ENCODE measurements at regions of chr6 and their contacts with region 1.

Region 1: DNA sequence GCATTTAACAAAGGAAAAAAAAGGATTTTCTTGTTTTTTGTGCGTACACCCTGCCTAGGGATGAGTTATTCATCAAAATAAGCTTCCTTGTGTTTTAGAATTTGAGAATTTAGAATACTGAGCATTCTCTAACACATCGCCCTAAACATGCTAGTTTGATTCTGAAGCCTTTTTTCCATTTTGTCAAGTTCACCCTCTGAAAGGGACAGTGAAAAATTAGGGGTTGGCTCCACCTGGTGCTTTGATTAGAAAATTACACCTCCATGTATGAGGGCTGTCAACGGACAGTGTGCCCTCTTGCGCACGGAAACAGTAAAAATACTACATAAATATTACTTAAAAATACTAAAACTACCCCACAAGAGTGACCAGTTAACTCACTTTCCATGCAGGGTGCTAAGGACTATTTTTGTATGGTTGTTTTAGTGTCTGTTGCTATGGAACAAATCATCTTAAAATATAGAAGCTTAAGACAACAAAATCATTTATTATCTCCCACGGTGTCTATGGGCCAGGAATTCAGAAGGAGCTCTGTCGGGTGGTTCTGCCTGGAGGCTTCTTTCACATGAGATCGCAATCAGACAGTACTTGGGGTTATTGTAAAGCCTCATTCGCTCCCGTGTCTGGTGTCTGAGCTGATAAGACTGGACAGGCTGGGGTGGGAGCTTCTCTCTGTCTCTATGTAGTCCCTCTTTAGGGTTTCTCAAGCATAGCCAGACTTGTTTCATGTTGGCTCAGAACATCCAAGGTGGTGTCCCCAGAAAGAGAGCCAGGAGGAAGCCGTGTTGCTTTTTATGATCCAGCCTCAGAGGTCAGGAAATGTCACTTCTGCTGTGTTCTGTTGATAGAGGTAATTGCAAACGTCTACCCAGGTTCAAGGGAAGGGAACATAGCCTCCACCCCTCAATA is 41.1 kb upstream of the TMEM170B start:
- DNase-seq: no peak
- ATAC-seq: peak; percentile 79
- H3K4me3 Mint-ChIP-seq: no peak overlapping the region
- H3K27ac Mint-ChIP-seq: peak overlapping the region; percentile 69
- H3K4me1 Mint-ChIP-seq: peaks cover 5% of the 10 kb centered on the region
- H3K27me3 Mint-ChIP-seq: no peaks in the 10 kb centered on the region
- CTCF ChIP-seq: peak; percentile 89

Region 2: GRCh38 chr6:10847684-10848083 is 648.7 kb before region 1 on chr6:
- CTCF ChIA-PET with region 1: no interaction called
- POLR2A ChIA-PET with region 1: no interaction called
- intact Hi-C with region 1: loop called (anchors 5 kb)
- DNase-seq: no peak
- ATAC-seq: no peak
- H3K4me3 Mint-ChIP-seq: no peak overlapping the region
- H3K27ac Mint-ChIP-seq: no peak overlapping the region
- H3K4me1 Mint-ChIP-seq: no peaks in the 10 kb centered on the region
- H3K27me3 Mint-ChIP-seq: peaks cover 6% of the 10 kb centered on the region
- CTCF ChIP-seq: no peak

Region 3: DNA sequence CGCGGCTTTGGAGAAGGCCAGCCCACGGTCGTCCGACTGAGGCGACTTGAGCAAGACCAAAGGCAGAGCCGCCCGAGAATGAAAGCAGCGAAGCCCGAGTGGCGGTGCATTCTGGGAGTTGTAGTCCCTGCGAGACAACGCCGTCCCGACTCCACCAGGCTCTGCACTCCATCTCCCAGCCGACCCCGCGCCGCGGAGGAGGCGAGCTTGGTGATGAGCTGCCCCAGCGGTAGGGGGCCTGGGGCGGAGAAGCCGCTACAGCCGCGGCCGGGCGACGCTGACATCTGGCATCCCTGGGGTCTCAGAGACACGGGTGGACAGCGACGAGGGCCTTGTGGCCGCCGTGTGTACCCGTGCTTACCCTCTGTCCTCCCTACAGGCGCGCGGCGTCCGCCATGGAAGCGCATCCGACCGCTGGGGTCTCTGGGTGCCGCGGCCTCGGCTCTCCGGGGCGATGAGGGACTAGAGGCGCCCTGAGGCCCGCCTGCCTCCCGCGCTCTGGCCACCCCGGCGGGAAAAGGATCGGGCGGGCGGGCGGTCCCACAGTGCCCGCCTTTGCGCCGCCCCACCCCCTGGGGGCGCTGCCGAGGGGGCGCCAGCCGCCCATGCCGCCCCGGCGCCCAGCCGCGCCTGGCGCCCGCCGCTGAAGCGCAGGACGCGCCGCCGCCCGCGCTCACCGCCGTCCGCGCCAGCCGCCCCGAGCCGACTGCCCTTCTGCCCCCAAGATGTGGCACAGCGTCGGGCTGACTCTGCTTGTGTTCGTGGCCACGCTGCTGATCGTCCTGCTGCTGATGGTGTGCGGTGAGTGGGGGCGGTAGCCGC is 402.6 kb before region 1 on chr6 and contains the start of gene SMIM13:
- CTCF ChIA-PET with region 1: interaction called, 6 read pairs
- POLR2A ChIA-PET with region 1: interaction called, 4 read pairs
- intact Hi-C with region 1: loop called (anchors 1 kb)
- DNase-seq: peak; percentile 90
- ATAC-seq: peak; percentile 90
- H3K4me3 Mint-ChIP-seq: peak within 1 kb of the TSS; percentile 96
- H3K27ac Mint-ChIP-seq: peak within 1 kb of the TSS; percentile 98
- H3K4me1 Mint-ChIP-seq: peaks cover 20% of the 10 kb centered on the region
- H3K27me3 Mint-ChIP-seq: peaks cover 3% of the 10 kb centered on the region
- CTCF ChIP-seq: no peak
- total RNA-seq, gene SMIM13: 5.8 and 5.9 TPM in 2 replicates

Region 4: DNA sequence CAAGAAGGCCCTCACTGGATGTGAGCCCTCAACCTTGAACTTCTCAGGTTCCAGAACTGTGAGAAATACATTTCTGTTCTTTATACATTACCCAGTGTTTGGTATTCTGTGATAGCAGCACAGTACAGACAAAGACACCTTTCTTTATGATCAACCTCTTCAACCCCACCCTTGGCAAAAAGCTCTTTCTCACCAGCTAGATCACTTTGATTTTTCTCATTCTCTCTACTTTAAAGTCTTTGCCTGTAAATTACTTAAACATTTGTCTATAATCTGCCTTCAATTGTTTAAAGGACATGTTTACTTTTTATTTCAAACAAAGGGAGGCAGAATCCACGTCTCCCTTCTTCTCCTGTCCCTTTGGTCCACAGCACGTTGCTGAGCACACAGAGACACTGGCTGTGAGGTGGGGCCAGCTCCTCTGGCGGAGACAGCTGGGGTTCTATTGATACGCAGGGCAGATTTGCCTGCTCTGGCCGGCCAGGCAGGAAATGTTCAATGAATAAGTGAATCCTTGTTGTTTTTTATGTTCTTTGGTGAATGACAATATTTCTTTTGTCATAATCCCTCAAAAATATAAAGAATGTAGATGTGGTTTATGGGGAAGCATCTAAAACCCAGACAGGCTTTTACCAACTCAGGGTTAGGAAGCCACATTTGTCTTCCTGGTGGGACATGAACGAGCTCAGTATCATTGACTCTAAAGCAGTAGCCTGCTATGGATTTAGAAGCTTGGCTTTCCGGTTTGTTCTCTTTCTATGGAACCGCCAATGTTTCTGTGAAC is 316.8 kb before region 1 on chr6:
- CTCF ChIA-PET with region 1: interaction called, 157 read pairs
- POLR2A ChIA-PET with region 1: no interaction called
- intact Hi-C with region 1: no loop called
- DNase-seq: no peak
- ATAC-seq: no peak
- H3K4me3 Mint-ChIP-seq: no peak overlapping the region
- H3K27ac Mint-ChIP-seq: no peak overlapping the region
- H3K4me1 Mint-ChIP-seq: no peaks in the 10 kb centered on the region
- H3K27me3 Mint-ChIP-seq: no peaks in the 10 kb centered on the region
- CTCF ChIP-seq: no peak

Region 5: GRCh38 chr6:11317885-11318771 is 178.3 kb before region 1 on chr6:
- CTCF ChIA-PET with region 1: interaction called, 8 read pairs
- POLR2A ChIA-PET with region 1: no interaction called
- intact Hi-C with region 1: loop called (anchors 1 kb)
- DNase-seq: no peak
- ATAC-seq: peak; percentile 89
- H3K4me3 Mint-ChIP-seq: peak overlapping the region; percentile 12
- H3K27ac Mint-ChIP-seq: peak overlapping the region; percentile 76
- H3K4me1 Mint-ChIP-seq: peaks cover 24% of the 10 kb centered on the region
- H3K27me3 Mint-ChIP-seq: no peaks in the 10 kb centered on the region
- CTCF ChIP-seq: no peak

Region 6: GRCh38 chr6:11404838-11405237 is 91.6 kb before region 1 on chr6:
- CTCF ChIA-PET with region 1: interaction called, 3 read pairs
- POLR2A ChIA-PET with region 1: interaction called, 4 read pairs
- intact Hi-C with region 1: loop called (anchors 2 kb)
- DNase-seq: no peak
- ATAC-seq: peak; percentile 47
- H3K4me3 Mint-ChIP-seq: peak overlapping the region; percentile 39
- H3K27ac Mint-ChIP-seq: peak overlapping the region; percentile 79
- H3K4me1 Mint-ChIP-seq: peaks cover 55% of the 10 kb centered on the region
- H3K27me3 Mint-ChIP-seq: no peaks in the 10 kb centered on the region
- CTCF ChIP-seq: no peak

Region 7: DNA sequence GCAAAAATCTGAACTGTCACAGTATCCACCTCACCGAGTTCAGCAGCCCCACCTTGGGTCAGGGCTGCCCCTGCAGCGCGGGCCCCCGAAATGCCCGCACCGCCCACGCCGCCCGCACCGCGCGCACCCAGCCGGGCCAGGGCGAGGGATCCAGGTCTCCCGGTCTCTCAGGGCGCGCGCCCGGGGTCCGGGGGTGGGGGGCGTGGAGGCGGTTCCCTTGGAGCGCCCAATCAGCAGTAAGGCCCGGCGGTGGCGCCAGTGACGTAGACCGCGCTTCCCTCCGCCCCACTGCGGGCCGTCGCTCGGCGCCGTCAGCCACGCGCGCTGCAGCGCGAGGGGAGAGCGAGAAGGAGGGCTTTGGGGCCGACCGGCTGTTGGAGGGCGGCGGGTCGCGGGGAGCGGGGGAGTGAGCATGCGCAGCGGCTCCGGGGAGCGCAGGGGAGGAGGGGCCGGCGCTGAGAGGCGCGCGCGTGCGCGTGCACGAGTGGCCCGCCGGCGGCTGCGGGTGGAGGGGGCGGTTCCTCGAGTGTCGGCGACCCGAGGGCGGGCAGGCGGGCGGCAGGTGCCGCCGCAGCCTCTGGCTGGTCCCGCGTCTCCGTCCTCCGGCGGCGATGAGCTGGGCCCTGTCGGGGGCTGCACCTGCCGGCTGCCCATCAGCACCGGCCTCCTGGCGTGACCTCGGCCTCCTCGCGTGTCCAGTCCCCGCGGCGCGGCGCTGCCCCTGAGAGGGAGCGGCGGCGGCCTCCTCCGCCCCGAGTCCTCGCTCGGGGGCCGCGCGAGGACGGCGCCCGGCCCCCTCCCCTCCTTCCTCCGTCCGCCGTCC is 41.0 kb after region 1 on chr6 and contains the start of gene TMEM170B:
- CTCF ChIA-PET with region 1: interaction called, 8 read pairs
- POLR2A ChIA-PET with region 1: no interaction called
- intact Hi-C with region 1: loop called (anchors 1 kb)
- DNase-seq: peak; percentile 99
- ATAC-seq: peak; percentile 94
- H3K4me3 Mint-ChIP-seq: peak within 1 kb of the TSS; percentile 84
- H3K27ac Mint-ChIP-seq: peak within 1 kb of the TSS; percentile 74
- H3K4me1 Mint-ChIP-seq: peaks cover 11% of the 10 kb centered on the region
- H3K27me3 Mint-ChIP-seq: no peaks in the 10 kb centered on the region
- CTCF ChIP-seq: no peak
- total RNA-seq, gene TMEM170B: 2.6 and 2.8 TPM in 2 replicates

Region 8: GRCh38 chr6:11595903-11596302 is 99.5 kb after region 1 on chr6:
- CTCF ChIA-PET with region 1: no interaction called
- POLR2A ChIA-PET with region 1: no interaction called
- intact Hi-C with region 1: no loop called
- DNase-seq: no peak
- ATAC-seq: no peak
- H3K4me3 Mint-ChIP-seq: no peak overlapping the region
- H3K27ac Mint-ChIP-seq: no peak overlapping the region
- H3K4me1 Mint-ChIP-seq: no peaks in the 10 kb centered on the region
- H3K27me3 Mint-ChIP-seq: peaks cover 9% of the 10 kb centered on the region
- CTCF ChIP-seq: no peak

Measured in activated B cell treated with CpG ODN at 0.5 μM for 24 hours (primary cell).